Posterior cingulate gyrus (tissue), 11 donors: ENCODE measurements at regions of chr20 and their contacts with region 1.

Region 1: DNA sequence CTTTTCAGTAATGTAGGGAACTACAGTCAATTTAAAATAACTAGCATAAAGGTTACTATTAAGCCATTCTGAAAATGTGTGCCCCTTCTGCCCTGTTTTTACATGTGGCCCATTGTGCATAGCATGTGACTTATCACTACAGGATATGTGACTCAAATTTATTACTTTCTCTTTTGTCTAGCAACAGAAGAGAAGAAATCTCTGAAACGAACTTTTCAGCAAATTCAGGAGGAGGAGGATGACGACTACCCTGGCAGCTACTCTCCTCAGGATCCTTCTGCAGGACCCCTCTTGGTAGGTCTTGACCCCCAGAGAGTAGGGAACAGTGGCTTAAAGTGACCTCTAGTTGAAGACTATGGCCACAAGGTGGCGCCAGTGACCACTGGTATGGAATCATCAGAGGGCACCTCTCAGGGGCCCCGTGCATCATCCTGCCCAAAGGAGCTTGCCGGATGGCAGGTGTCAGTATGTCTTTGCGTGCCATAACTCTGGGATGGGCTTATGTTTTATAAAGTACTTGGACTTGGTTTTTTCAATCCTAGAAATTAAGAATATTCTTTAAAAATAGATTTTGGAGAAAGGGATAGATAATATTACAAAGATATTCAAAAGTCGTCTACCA is 23.9 kb downstream of the RPRD1B start:
- DNase-seq: peak; percentile 41 to 96 (median 85)

Region 2: GRCh38 chr20:37804584-37805566 is 252.6 kb before region 1 on chr20:
- intact Hi-C with region 1: no loop called
- DNase-seq: peak in 8 of 10 donors; percentile 35 to 92 (median 57)

Region 3: GRCh38 chr20:37911838-37912281 is 145.6 kb before region 1 on chr20:
- intact Hi-C with region 1: no loop called
- DNase-seq: peak in 8 of 10 donors; percentile 44 to 94 (median 74)

Region 4: GRCh38 chr20:38084400-38084951 is 27.0 kb after region 1 on chr20:
- intact Hi-C with region 1: no loop called
- DNase-seq: no peak

Region 5: GRCh38 chr20:38165089-38165989 is 107.9 kb after region 1 on chr20 and contains the start of gene TGM2:
- intact Hi-C with region 1: loop called (anchors 2 kb)
- DNase-seq: peak in 8 of 10 donors; percentile 18 to 92 (median 44)

Region 6: DNA sequence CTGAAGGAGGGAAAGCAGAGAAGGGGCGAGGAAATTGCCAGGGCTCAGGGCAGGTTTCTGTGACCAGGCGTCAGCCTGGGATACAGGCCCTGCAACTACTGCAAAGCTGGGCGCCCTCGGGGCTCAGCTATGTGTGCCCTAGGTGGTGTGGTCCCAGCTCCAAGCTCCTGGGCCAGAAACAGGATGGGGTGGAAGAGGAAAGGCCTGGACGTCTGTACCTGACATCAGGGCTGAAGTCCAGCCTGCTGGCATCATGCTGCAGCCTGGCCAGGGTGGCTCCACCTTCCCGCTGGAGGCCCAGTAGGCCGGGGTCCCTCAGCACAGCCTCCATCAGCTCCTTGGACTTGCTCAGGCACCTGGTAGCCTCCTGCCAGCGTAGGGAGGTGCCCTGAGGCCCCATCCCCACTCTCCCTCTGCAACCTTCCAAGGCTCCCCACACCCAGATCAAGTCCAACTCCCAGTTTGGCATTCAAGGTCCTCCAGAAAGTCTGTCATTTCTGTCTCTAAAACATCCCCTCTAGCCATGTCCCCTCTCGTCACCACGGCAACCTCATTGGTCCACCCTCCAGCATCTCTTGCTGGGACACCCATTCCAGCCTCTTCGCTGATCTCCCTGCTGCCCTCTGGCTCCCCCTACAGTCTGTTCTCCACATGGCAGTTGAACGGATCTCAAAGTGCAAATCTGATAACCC is 164.9 kb after region 1 on chr20:
- intact Hi-C with region 1: loop called (anchors 2 kb)
- DNase-seq: peak in 7 of 10 donors; percentile 60 to 91 (median 75)

Region 7: DNA sequence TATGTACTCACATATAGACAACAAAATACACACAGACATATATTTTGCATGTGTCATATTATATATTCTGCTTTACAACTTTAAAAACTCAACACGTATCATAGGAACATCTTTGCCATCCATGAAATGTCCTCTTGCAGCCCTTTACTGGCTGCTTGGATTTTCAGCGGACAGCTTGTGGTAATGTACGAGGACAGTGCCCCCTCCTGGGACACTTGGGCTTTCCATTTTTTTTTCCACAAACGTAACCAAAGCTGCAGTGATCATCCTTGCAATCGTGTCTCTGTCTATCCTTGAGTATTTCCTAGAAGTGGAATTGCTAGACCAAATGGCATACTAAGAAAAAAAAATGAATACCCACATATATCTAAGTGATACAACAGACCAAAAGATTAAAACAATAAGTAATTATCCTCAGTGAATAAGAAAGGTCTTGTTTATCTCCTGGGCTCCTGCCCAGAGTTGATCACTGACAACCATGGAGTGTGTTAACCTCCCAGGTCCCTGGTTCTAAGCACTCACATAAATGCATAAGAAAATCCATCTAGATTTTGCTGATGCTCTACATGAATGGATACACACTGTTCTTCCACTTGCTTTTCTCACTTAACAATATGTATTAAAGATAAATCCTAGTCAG is 264.6 kb after region 1 on chr20:
- intact Hi-C with region 1: loop called (anchors 5 kb)
- DNase-seq: peak in 7 of 10 donors; percentile 52 to 90 (median 54)

Region 8: GRCh38 chr20:38406476-38406875 is 349.0 kb after region 1 on chr20:
- intact Hi-C with region 1: loop called (anchors 5 kb)
- DNase-seq: peak in 1 of 10 donors; percentile 24